ENCODE measurements at regions of chr2 and their contacts with region 1.

Region 1: GRCh38 chr2:68244456-68244855 is 7.9 kb downstream of the PPP3R1 start:
- DNase-seq: no peak
- H3K4me3 ChIP-seq: no peak overlapping the region
- H3K27ac ChIP-seq: no peak overlapping the region
- H3K4me1 ChIP-seq: peaks cover 31 to 50% of the 10 kb centered on the region in 2 donors
- H3K27me3 ChIP-seq: no peaks in the 10 kb centered on the region
- CTCF ChIP-seq: peak in 2 of 6 experiments; percentile 7 to 23
- POLR2A ChIP-seq: no peak

Region 2: DNA sequence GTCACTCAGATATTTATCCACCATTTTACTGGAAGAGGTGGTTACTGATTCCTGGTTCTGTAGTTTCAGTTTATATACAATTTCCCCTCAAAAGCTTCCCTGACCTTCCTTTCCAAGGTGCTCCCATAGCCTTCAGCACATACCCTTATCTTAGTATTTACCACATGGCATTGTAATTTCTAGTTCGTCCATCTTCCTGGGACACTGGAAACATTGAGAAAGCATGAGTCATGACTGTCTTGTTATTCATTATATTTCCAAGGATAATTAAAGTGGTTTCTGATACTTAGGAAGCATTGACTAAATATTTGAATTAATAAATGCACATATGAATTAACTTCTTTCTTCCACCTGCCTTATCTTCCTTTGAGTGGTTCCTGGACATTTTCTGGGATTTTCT is 643.5 kb before region 1 on chr2:
- intact Hi-C with region 1: no loop called
- DNase-seq: no peak
- H3K4me3 ChIP-seq: no peak overlapping the region
- H3K27ac ChIP-seq: no peak overlapping the region
- H3K4me1 ChIP-seq: no peaks in the 10 kb centered on the region
- H3K27me3 ChIP-seq: no peaks in the 10 kb centered on the region
- CTCF ChIP-seq: no peak
- POLR2A ChIP-seq: no peak

Region 3: DNA sequence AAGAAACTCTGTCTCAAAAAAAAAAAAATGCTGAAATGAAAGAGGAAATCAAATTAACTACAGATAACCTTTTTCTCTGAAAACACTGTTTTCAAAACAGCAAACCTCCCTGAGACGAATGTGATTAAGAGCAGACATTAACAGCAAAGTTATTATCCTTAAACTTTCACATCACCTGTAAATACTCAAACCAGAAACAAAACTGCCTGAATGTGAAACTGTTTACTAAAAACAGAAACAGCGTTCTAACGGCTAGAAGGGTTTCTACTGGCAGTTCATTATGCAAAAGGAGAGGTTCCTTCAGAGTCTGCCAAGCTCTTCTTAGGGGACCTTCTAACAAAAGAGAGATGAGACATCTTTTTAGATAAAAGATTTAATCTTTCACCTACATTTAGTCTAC is 40.9 kb before region 1 on chr2:
- intact Hi-C with region 1: loop called (anchors 5 kb)
- DNase-seq: no peak
- H3K4me3 ChIP-seq: no peak overlapping the region
- H3K27ac ChIP-seq: no peak overlapping the region
- H3K4me1 ChIP-seq: peaks cover 0 to 5% of the 10 kb centered on the region in 2 donors
- H3K27me3 ChIP-seq: no peaks in the 10 kb centered on the region
- CTCF ChIP-seq: no peak
- POLR2A ChIP-seq: no peak